ENCODE measurements at regions of chr9 and their contacts with region 1.

Region 1: GRCh38 chr9:38392235-38393127 is at the start of gene ALDH1B1:
- DNase-seq: peak; percentile 89 to 93
- H3K4me3 ChIP-seq: peak within 1 kb of the TSS; percentile 95
- H3K4me3 Mint-ChIP-seq: peak within 1 kb of the TSS; percentile 80
- H3K27ac Mint-ChIP-seq: peak within 1 kb of the TSS; percentile 89
- H3K4me1 ChIP-seq: peaks cover 9% of the 10 kb centered on the region
- H3K4me1 Mint-ChIP-seq: peaks cover 20% of the 10 kb centered on the region
- H3K27me3 ChIP-seq: no peaks in the 10 kb centered on the region
- H3K27me3 Mint-ChIP-seq: no peaks in the 10 kb centered on the region
- CTCF ChIP-seq: peak; percentile 13 to 44
- total RNA-seq, gene ALDH1B1: 35.7 and 38.3 TPM in 2 replicates

Region 2: DNA sequence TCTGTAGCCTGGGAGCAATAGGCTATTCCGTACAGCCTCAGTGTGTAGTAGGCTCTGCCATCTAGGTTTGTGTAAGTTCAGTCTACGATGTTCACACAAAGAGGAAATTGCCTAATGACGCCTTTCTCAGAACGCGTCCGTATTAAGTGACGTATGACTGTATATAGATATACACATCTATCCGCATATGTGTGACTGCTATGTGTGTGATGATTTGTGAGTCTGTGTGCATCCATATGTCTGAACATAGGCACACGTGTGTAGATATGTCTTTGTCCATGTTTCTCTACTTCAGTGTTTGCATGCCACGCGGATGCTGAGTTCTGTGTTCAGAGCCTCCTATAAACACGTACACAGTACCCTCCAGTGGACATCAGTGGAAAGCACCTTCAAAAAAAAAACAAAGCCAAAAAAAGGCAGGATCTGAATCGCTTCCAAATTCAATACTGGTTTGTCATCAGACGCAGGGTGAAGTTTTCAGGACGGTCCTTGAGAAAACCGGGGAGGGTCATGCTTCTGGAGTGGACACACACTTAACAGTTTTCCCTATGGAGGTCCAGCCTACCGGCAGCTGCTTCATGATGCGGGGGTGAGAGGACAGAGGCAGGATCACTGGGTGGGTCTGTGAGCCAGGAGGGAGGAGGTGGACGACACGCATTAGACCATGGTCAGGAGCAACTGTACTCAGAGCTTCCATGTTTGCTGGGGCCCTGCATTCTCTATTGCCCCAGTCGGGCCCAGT is 29.5 kb before region 1 on chr9:
- CTCF ChIA-PET with region 1: no interaction called
- POLR2A ChIA-PET with region 1: no interaction called
- intact Hi-C with region 1: no loop called
- DNase-seq: peak; percentile 47 to 53
- H3K4me3 ChIP-seq: no peak overlapping the region
- H3K4me3 Mint-ChIP-seq: no peak overlapping the region
- H3K27ac Mint-ChIP-seq: no peak overlapping the region
- H3K4me1 ChIP-seq: no peaks in the 10 kb centered on the region
- H3K4me1 Mint-ChIP-seq: no peaks in the 10 kb centered on the region
- H3K27me3 ChIP-seq: no peaks in the 10 kb centered on the region
- H3K27me3 Mint-ChIP-seq: no peaks in the 10 kb centered on the region
- CTCF ChIP-seq: peak; percentile 49 to 61

Region 3: GRCh38 chr9:38380872-38381534 is 11.5 kb before region 1 on chr9:
- CTCF ChIA-PET with region 1: no interaction called
- POLR2A ChIA-PET with region 1: no interaction called
- intact Hi-C with region 1: loop called (anchors 1 kb)
- DNase-seq: peak; percentile 81 to 90
- H3K4me3 ChIP-seq: no peak overlapping the region
- H3K4me3 Mint-ChIP-seq: peak overlapping the region; percentile 52
- H3K27ac Mint-ChIP-seq: peak overlapping the region; percentile 94
- H3K4me1 ChIP-seq: peaks cover 31% of the 10 kb centered on the region
- H3K4me1 Mint-ChIP-seq: peaks cover 13% of the 10 kb centered on the region
- H3K27me3 ChIP-seq: no peaks in the 10 kb centered on the region
- H3K27me3 Mint-ChIP-seq: no peaks in the 10 kb centered on the region
- CTCF ChIP-seq: no peak

Region 4: GRCh38 chr9:38445154-38446043 is 52.9 kb after region 1 on chr9:
- CTCF ChIA-PET with region 1: no interaction called
- POLR2A ChIA-PET with region 1: no interaction called
- intact Hi-C with region 1: loop called (anchors 10 kb)
- DNase-seq: no peak
- H3K4me3 ChIP-seq: no peak overlapping the region
- H3K4me3 Mint-ChIP-seq: no peak overlapping the region
- H3K27ac Mint-ChIP-seq: no peak overlapping the region
- H3K4me1 ChIP-seq: peaks cover 17% of the 10 kb centered on the region
- H3K4me1 Mint-ChIP-seq: peaks cover 17% of the 10 kb centered on the region
- H3K27me3 ChIP-seq: no peaks in the 10 kb centered on the region
- H3K27me3 Mint-ChIP-seq: no peaks in the 10 kb centered on the region
- CTCF ChIP-seq: no peak

Measured in Caco-2 (cell line).